ENCODE measurements at regions of chr19 and their contacts with region 1.

Region 1: DNA sequence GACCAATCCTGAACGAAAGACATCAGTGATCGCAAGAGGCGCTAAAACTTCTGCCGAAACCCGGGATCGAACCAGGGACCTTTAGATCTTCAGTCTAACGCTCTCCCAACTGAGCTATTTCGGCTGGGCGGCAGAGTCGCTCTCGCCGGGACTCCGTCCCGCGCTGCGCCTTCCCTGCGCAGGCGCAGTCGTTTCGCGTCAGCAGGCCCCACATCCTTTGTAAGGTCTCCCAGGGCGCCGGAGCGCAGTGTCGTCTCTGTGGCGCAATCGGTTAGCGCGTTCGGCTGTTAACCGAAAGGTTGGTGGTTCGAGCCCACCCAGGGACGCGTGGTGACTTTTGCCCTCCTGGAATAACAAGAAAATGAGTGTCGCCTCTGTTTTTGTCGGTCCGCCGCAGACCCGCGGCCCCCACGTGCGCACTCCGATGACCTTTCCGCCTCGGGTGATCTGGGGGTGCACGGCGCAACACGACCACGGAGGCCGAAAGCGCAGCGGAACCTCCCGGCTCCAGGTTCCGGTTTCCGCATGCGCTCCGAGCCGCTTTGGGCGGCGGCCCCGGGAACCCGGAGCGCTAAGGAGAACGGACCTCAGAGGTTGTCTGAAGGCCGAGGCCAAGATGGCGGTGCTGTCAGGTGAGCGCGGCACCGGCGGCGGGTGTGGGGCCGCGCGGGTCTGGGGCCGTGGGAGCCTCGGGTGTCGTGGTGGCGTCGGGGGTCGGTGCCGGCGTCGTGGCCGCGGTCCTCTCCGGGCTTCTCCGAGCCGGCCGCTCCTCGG is at the start of gene NDUFS7:
- DNase-seq: peak; percentile 89
- ATAC-seq: peak; percentile 92
- H3K4me3 Mint-ChIP-seq: peak within 1 kb of the TSS; percentile 78
- H3K27ac Mint-ChIP-seq: peak within 1 kb of the TSS; percentile 94
- H3K4me1 Mint-ChIP-seq: peaks cover 15% of the 10 kb centered on the region
- H3K27me3 Mint-ChIP-seq: peaks cover 3% of the 10 kb centered on the region
- CTCF ChIP-seq: no peak
- total RNA-seq, gene NDUFS7: 113 to 120 TPM

Region 2: GRCh38 chr19:1401138-1401888 is 17.8 kb after region 1 on chr19 and contains the start of gene GAMT:
- CTCF ChIA-PET with region 1: no interaction called
- POLR2A ChIA-PET with region 1: interaction called, 3 read pairs
- intact Hi-C with region 1: loop called (anchors 2 kb)
- DNase-seq: peak; percentile 59
- ATAC-seq: peak; percentile 77
- H3K4me3 Mint-ChIP-seq: peak within 1 kb of the TSS; percentile 72
- H3K27ac Mint-ChIP-seq: no peak within 1 kb of the TSS
- H3K4me1 Mint-ChIP-seq: peaks cover 16% of the 10 kb centered on the region
- H3K27me3 Mint-ChIP-seq: peaks cover 5% of the 10 kb centered on the region
- CTCF ChIP-seq: peak; percentile 64
- total RNA-seq, gene GAMT: 27.8 to 29.5 TPM

Measured in activated CD8-positive, alpha-beta T cell treated with anti-CD3 and anti-CD28 coated beads for 36 hours (primary cell).